Caco-2 (cell line): ENCODE measurements at regions of chr14 and their contacts with region 1.

Region 1: GRCh38 chr14:31283578-31284252 is 76.1 kb upstream of the HECTD1 start:
- DNase-seq: no peak
- H3K4me3 ChIP-seq: no peak overlapping the region
- H3K4me3 Mint-ChIP-seq: no peak overlapping the region
- H3K27ac Mint-ChIP-seq: no peak overlapping the region
- H3K4me1 ChIP-seq: peaks cover 25% of the 10 kb centered on the region
- H3K4me1 Mint-ChIP-seq: peaks cover 22% of the 10 kb centered on the region
- H3K27me3 ChIP-seq: no peaks in the 10 kb centered on the region
- H3K27me3 Mint-ChIP-seq: no peaks in the 10 kb centered on the region
- CTCF ChIP-seq: no peak

Region 2: GRCh38 chr14:31159682-31160296 is 123.9 kb before region 1 on chr14:
- CTCF ChIA-PET with region 1: no interaction called
- POLR2A ChIA-PET with region 1: no interaction called
- intact Hi-C with region 1: loop called (anchors 5 kb)
- DNase-seq: no peak
- H3K4me3 ChIP-seq: no peak overlapping the region
- H3K4me3 Mint-ChIP-seq: no peak overlapping the region
- H3K27ac Mint-ChIP-seq: no peak overlapping the region
- H3K4me1 ChIP-seq: peaks cover 14% of the 10 kb centered on the region
- H3K4me1 Mint-ChIP-seq: peaks cover 6% of the 10 kb centered on the region
- H3K27me3 ChIP-seq: no peaks in the 10 kb centered on the region
- H3K27me3 Mint-ChIP-seq: no peaks in the 10 kb centered on the region
- CTCF ChIP-seq: no peak

Region 3: GRCh38 chr14:31229638-31230229 is 54.0 kb before region 1 on chr14:
- CTCF ChIA-PET with region 1: no interaction called
- POLR2A ChIA-PET with region 1: no interaction called
- intact Hi-C with region 1: loop called (anchors 1 kb)
- DNase-seq: peak; percentile 93 to 95
- H3K4me3 ChIP-seq: no peak overlapping the region
- H3K4me3 Mint-ChIP-seq: peak overlapping the region; percentile 62
- H3K27ac Mint-ChIP-seq: peak overlapping the region; percentile 72
- H3K4me1 ChIP-seq: peaks cover 20% of the 10 kb centered on the region
- H3K4me1 Mint-ChIP-seq: no peaks in the 10 kb centered on the region
- H3K27me3 ChIP-seq: no peaks in the 10 kb centered on the region
- H3K27me3 Mint-ChIP-seq: no peaks in the 10 kb centered on the region
- CTCF ChIP-seq: no peak

Region 4: GRCh38 chr14:31263485-31264133 is 20.1 kb before region 1 on chr14:
- CTCF ChIA-PET with region 1: no interaction called
- POLR2A ChIA-PET with region 1: interaction called, 6 read pairs
- intact Hi-C with region 1: loop called (anchors 1 kb)
- DNase-seq: peak; percentile 71 to 78
- H3K4me3 ChIP-seq: no peak overlapping the region
- H3K4me3 Mint-ChIP-seq: no peak overlapping the region
- H3K27ac Mint-ChIP-seq: peak overlapping the region; percentile 77
- H3K4me1 ChIP-seq: peaks cover 50% of the 10 kb centered on the region
- H3K4me1 Mint-ChIP-seq: peaks cover 39% of the 10 kb centered on the region
- H3K27me3 ChIP-seq: no peaks in the 10 kb centered on the region
- H3K27me3 Mint-ChIP-seq: no peaks in the 10 kb centered on the region
- CTCF ChIP-seq: no peak

Region 5: DNA sequence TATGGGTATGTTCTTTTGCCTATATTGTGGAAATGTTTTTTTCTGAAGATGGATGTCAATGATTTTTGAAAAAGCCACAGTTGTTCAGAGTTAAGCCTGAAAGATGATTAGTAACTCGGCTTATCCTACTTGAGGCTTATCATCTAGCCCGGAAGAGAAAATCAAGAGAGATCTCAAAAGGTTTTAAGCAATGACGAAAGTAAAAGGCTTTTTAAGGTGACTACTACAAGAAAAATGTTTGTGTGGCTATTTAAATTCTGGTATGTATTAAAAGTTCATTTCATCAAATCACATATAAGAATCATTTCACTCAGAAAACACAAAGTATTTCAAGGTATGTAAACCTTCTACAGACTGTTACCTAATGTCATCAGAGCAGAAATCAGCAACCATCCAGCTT is 96.4 kb after region 1 on chr14:
- CTCF ChIA-PET with region 1: no interaction called
- POLR2A ChIA-PET with region 1: no interaction called
- intact Hi-C with region 1: no loop called
- DNase-seq: no peak
- H3K4me3 ChIP-seq: no peak overlapping the region
- H3K4me3 Mint-ChIP-seq: no peak overlapping the region
- H3K27ac Mint-ChIP-seq: no peak overlapping the region
- H3K4me1 ChIP-seq: no peaks in the 10 kb centered on the region
- H3K4me1 Mint-ChIP-seq: no peaks in the 10 kb centered on the region
- H3K27me3 ChIP-seq: no peaks in the 10 kb centered on the region
- H3K27me3 Mint-ChIP-seq: no peaks in the 10 kb centered on the region
- CTCF ChIP-seq: no peak

Region 6: DNA sequence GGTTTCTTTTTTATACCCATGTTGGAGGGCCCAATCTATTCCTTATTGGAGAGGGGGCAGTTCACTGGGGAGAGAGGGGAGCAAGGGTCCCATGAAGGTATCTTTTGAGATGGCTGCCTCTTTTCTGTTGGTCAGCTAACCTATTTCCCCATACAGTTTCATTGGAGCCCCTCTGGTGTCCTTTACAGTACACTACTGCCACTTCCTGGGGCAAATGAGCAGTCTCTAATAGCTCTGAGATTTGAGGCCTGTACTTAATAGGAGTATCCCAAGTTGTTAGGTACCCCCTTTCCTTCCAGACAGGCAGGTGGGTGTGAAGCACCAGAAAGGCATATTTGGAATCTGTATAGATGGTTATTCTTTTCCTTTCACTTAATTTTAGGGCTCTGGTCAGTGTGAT is 960.7 kb after region 1 on chr14:
- CTCF ChIA-PET with region 1: no interaction called
- POLR2A ChIA-PET with region 1: interaction called, 13 read pairs
- intact Hi-C with region 1: no loop called
- DNase-seq: no peak
- H3K4me3 ChIP-seq: no peak overlapping the region
- H3K4me3 Mint-ChIP-seq: no peak overlapping the region
- H3K27ac Mint-ChIP-seq: no peak overlapping the region
- H3K4me1 ChIP-seq: no peaks in the 10 kb centered on the region
- H3K4me1 Mint-ChIP-seq: no peaks in the 10 kb centered on the region
- H3K27me3 ChIP-seq: no peaks in the 10 kb centered on the region
- H3K27me3 Mint-ChIP-seq: no peaks in the 10 kb centered on the region
- CTCF ChIP-seq: no peak